Tibial artery (tissue), 4 donors: ENCODE measurements at regions of chr15 and their contacts with region 1.

Region 1: GRCh38 chr15:55168329-55168974 is 28.3 kb downstream of the RSL24D1 start:
- DNase-seq: peak in 1 of 2 donors; percentile 24
- H3K4me3 ChIP-seq: no peak overlapping the region
- H3K27ac ChIP-seq: no peak overlapping the region
- H3K4me1 ChIP-seq: no peaks in the 10 kb centered on the region
- H3K27me3 ChIP-seq: no peaks in the 10 kb centered on the region
- CTCF ChIP-seq: peak; percentile 69 to 76

Region 2: DNA sequence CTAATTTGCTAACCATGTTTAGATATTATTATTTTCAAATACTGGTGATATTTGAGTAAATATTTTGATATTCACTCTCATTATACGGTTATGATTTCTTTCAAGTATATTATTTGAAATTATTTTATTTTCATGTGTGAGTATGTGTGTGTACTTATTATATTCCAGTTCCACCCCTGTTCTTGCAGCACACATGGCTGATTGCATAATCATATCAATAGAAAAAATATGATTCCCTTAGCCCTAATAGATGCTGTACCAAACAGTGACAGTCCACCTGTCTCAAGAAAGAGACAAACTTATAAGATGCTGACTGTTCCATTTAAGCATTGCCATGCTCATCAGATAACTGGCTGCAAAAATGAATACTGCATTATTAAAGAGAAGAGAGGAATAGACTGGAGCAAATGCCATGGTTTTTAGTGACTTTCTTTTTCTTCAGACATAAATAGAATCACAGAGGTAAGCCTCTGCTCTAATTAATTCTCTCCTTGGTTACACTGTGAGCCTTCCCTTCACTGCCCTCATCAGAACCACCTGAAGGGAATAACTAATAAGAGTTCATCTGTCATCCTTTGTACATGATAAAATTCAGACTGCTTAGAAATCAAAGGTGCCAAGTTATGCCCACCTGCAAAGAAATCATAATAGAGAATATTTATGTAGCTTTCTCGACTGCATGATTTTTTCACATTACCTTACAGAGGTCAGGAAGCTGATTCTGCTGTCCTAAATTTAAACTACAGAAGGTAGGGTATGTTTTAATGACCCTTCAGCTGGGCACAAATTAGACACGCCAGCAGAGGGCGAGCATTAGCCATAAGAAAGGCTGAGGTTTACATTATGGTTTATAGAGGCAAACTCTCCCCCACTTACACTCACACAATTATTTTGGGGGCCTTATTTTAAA is 1205.9 kb before region 1 on chr15:
- intact Hi-C with region 1: loop called (anchors 10 kb)
- DNase-seq: peak in 1 of 2 donors; percentile 20
- H3K4me3 ChIP-seq: no peak overlapping the region
- H3K27ac ChIP-seq: no peak overlapping the region
- H3K4me1 ChIP-seq: no peaks in the 10 kb centered on the region
- H3K27me3 ChIP-seq: no peaks in the 10 kb centered on the region
- CTCF ChIP-seq: peak; percentile 48 to 56

Region 3: DNA sequence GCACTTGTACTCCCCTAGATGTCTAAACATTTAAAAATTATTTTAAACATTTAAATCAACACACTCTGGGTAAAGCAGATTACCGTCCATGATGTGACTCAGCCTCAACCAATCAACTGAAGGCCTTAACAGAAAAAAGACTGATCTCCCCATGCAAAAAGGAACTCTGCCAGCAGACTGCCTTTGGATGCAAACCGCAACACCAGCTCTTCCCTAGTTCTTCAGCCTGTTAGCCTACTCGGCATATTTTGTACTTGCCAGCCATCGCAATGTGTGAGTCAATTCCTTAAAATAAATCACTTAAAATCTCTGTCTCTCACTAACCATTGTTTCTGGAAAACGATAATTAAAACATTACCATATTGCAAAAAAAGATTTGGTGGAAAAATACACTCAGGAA is 347.6 kb before region 1 on chr15:
- intact Hi-C with region 1: no loop called
- DNase-seq: peak in 1 of 2 donors; percentile 32
- H3K4me3 ChIP-seq: no peak overlapping the region
- H3K27ac ChIP-seq: no peak overlapping the region
- H3K4me1 ChIP-seq: no peaks in the 10 kb centered on the region
- H3K27me3 ChIP-seq: no peaks in the 10 kb centered on the region
- CTCF ChIP-seq: no peak

Region 4: DNA sequence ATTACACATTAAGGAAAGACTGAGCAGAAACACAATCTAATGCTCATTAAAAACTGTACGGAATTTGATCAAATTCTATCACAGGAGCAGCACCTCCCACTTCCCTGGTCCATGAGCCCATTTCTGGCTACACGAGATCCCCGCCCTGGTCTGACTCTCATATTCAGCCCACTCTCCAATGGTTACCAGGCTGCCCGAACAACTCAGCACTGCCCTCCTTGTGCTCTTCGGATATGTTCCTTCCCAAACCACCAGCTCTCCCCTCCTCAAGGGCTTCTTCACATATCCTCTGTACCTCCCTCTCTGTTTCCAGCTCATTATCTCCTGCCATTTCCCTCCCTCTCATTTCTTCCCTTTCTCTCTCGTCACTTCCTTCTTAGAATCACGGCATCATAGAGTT is 152.2 kb before region 1 on chr15:
- intact Hi-C with region 1: no loop called
- DNase-seq: no peak
- H3K4me3 ChIP-seq: no peak overlapping the region
- H3K27ac ChIP-seq: no peak overlapping the region
- H3K4me1 ChIP-seq: no peaks in the 10 kb centered on the region
- H3K27me3 ChIP-seq: no peaks in the 10 kb centered on the region
- CTCF ChIP-seq: no peak

Region 5: GRCh38 chr15:55133972-55134371 is 34.5 kb before region 1 on chr15:
- intact Hi-C with region 1: no loop called
- DNase-seq: no peak
- H3K4me3 ChIP-seq: no peak overlapping the region
- H3K27ac ChIP-seq: no peak overlapping the region
- H3K4me1 ChIP-seq: no peaks in the 10 kb centered on the region
- H3K27me3 ChIP-seq: no peaks in the 10 kb centered on the region
- CTCF ChIP-seq: no peak